Heart left ventricle (tissue), 16 donors: ENCODE measurements at regions of chr4 and their contacts with region 1.

Region 1: GRCh38 chr4:158065176-158065575 is 107.6 kb downstream of the GASK1B start:
- DNase-seq: no peak
- ATAC-seq: no peak
- H3K4me3 ChIP-seq: no peak overlapping the region
- H3K27ac ChIP-seq: no peak overlapping the region
- H3K4me1 ChIP-seq: peaks cover 0 to 12% (median 9%) of the 10 kb centered on the region in 12 donors
- H3K27me3 ChIP-seq: no peaks in the 10 kb centered on the region
- CTCF ChIP-seq: no peak
- POLR2A ChIP-seq: no peak

Region 2: GRCh38 chr4:158015240-158015639 is 49.9 kb before region 1 on chr4:
- intact Hi-C with region 1: loop called in 1 of 10 experiments (anchors 5 kb)
- DNase-seq: no peak
- ATAC-seq: no peak
- H3K4me3 ChIP-seq: no peak overlapping the region
- H3K27ac ChIP-seq: no peak overlapping the region
- H3K4me1 ChIP-seq: peaks cover 0 to 51% (median 15%) of the 10 kb centered on the region in 12 donors
- H3K27me3 ChIP-seq: no peaks in the 10 kb centered on the region
- CTCF ChIP-seq: no peak
- POLR2A ChIP-seq: no peak